ENCODE measurements at regions of chr2 and their contacts with region 1.

Region 1: DNA sequence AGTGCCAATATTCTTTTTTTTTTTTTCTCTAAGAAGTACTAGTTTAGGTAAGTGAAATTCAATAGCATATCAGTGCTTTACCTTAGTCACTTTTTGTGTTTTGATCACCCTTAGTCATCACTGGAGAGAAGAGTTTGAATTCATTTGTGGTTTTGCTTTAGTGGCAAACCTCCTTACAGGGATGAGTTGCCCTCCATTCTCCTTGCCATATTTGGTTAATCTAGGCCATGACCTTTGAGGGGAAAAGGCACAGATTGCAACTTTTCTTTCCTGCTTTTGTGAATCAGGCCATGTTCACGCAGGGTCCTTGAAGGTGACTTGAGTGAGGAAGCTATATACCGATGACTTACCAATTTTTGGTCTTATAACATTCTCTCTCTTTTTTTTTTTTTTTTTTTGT is 34.4 kb downstream of the PLEKHA3 start:
- DNase-seq: peak; percentile 92
- ATAC-seq: peak; percentile 86
- H3K4me3 ChIP-seq: no peak overlapping the region
- H3K27ac ChIP-seq: peak overlapping the region; percentile 47
- H3K4me1 ChIP-seq: peaks cover 37% of the 10 kb centered on the region
- H3K27me3 ChIP-seq: no peaks in the 10 kb centered on the region
- CTCF ChIP-seq: no peak

Region 2: DNA sequence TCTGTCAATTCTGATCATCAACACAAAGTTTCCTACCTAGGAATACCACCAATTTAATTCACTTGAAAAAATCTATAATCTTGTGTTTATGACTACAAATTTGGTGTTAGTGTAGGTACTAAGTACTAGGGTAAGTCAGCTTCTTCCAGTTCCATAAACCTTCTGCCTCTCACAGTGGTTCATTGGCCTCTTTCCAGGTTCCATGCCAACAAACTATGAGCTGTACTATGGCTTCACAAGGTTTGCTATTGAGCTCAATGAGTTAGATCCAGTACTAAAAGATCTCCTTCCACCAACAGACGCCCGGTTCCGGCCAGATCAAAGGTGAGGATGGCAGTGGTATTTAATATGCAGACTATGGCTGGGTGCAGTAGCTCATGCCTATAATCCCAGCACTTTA is 122.4 kb before region 1 on chr2:
- CTCF ChIA-PET with region 1: no interaction called
- POLR2A ChIA-PET with region 1: no interaction called
- intact Hi-C with region 1: no loop called
- DNase-seq: peak; percentile 89
- ATAC-seq: peak; percentile 82
- H3K4me3 ChIP-seq: no peak overlapping the region
- H3K27ac ChIP-seq: peak overlapping the region; percentile 50
- H3K4me1 ChIP-seq: peaks cover 12% of the 10 kb centered on the region
- H3K27me3 ChIP-seq: no peaks in the 10 kb centered on the region
- CTCF ChIP-seq: no peak

Region 3: GRCh38 chr2:178414266-178415247 is 100.1 kb before region 1 on chr2:
- CTCF ChIA-PET with region 1: no interaction called
- POLR2A ChIA-PET with region 1: no interaction called
- intact Hi-C with region 1: no loop called
- DNase-seq: peak; percentile 96
- ATAC-seq: peak; percentile 85
- H3K4me3 ChIP-seq: peak overlapping the region; percentile 70
- H3K27ac ChIP-seq: peak overlapping the region; percentile 71
- H3K4me1 ChIP-seq: peaks cover 6% of the 10 kb centered on the region; the same call in 1 of the 2 replicates
- H3K27me3 ChIP-seq: no peaks in the 10 kb centered on the region
- CTCF ChIP-seq: peak; percentile 92

Region 4: DNA sequence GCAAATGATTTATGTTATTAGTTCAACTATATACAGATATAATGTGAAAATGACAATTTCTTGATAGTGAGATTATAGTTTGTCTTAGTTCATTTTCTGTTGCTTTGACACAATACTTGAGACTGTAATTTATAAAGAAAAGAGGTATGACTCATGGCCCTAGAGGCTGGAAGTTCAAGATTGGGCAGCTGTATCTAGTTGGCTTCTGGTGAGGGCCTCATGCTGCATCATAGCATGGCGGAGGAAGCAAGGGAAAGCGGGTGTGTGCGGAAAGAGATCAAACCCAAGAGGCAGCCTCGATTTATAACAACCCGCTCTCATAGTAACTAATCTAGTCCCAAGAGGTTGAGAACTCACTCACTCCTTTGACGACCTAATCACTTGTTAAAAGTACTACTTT is 23.1 kb before region 1 on chr2:
- CTCF ChIA-PET with region 1: no interaction called
- POLR2A ChIA-PET with region 1: interaction called, 11 read pairs
- intact Hi-C with region 1: no loop called
- DNase-seq: no peak
- ATAC-seq: no peak
- H3K4me3 ChIP-seq: no peak overlapping the region
- H3K27ac ChIP-seq: no peak overlapping the region
- H3K4me1 ChIP-seq: no peaks in the 10 kb centered on the region
- H3K27me3 ChIP-seq: no peaks in the 10 kb centered on the region
- CTCF ChIP-seq: no peak

Region 5: DNA sequence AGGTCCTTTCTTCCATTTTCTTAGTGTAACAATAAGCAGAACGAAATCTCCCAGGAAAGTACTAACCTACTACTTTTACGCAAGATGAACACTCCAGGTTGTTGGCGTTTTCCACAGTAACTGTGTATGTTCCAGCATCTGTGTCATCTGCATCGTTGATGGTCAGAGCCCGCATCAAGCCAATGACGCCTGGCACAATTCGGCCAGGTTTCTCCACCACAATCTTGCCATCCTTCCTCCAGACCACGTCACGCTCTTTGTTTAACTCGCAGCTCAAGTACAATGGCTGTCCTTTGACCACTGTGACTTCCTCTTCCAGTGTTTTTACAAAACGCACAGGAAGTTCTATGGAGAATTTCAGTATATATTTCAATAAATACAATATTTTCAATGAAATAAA is 121.2 kb after region 1 on chr2:
- CTCF ChIA-PET with region 1: no interaction called
- POLR2A ChIA-PET with region 1: interaction called, 13 read pairs
- intact Hi-C with region 1: no loop called
- DNase-seq: no peak
- ATAC-seq: no peak
- H3K4me3 ChIP-seq: no peak overlapping the region
- H3K27ac ChIP-seq: no peak overlapping the region
- H3K4me1 ChIP-seq: no peaks in the 10 kb centered on the region
- H3K27me3 ChIP-seq: peaks cover 83% of the 10 kb centered on the region
- CTCF ChIP-seq: no peak

Region 6: GRCh38 chr2:178863856-178864620 is 349.4 kb after region 1 on chr2:
- CTCF ChIA-PET with region 1: no interaction called
- POLR2A ChIA-PET with region 1: no interaction called
- intact Hi-C with region 1: no loop called
- DNase-seq: peak; percentile 84
- ATAC-seq: peak; percentile 94
- H3K4me3 ChIP-seq: peak overlapping the region; percentile 8; the same call in 1 of the 2 replicates
- H3K27ac ChIP-seq: peak overlapping the region; percentile 78
- H3K4me1 ChIP-seq: peaks cover 41% of the 10 kb centered on the region
- H3K27me3 ChIP-seq: no peaks in the 10 kb centered on the region
- CTCF ChIP-seq: no peak